OCI-LY7 (cell line): ENCODE measurements at regions of chr2 and their contacts with region 1.

Region 1: GRCh38 chr2:7427293-7428060 is 510.3 kb downstream of the RNF144A start:
- DNase-seq: peak; percentile 92
- H3K4me3 ChIP-seq: no peak overlapping the region
- H3K27ac ChIP-seq: no peak overlapping the region
- H3K4me1 ChIP-seq: peaks cover 48% of the 10 kb centered on the region
- CTCF ChIP-seq: peak; percentile 91

Region 2: DNA sequence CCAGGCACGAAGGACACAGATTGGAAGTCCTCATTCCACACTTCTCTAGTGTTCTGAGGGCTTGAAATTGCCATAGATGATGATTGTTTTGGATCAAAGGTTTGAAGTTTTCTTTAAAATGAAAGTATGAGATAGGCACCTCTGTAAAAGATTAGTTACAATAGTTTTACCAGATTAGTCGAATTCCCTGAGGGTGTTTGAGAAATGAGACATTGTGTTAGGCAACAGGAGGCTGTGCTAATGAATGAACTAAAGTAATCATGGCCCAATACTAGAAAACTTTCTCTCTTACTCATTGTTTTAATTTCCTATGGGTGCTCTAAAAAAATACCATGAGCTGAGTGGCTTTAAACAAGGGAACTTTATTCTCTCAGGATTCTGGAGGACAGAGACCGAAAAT is 88.5 kb before region 1 on chr2:
- CTCF ChIA-PET with region 1: no interaction called
- POLR2A ChIA-PET with region 1: no interaction called
- intact Hi-C with region 1: no loop called
- DNase-seq: no peak
- H3K4me3 ChIP-seq: no peak overlapping the region
- H3K27ac ChIP-seq: no peak overlapping the region
- H3K4me1 ChIP-seq: no peaks in the 10 kb centered on the region
- CTCF ChIP-seq: no peak

Region 3: GRCh38 chr2:7394195-7394594 is 33.3 kb before region 1 on chr2:
- CTCF ChIA-PET with region 1: no interaction called
- POLR2A ChIA-PET with region 1: no interaction called
- intact Hi-C with region 1: no loop called
- DNase-seq: peak; percentile 11
- H3K4me3 ChIP-seq: no peak overlapping the region
- H3K27ac ChIP-seq: no peak overlapping the region
- H3K4me1 ChIP-seq: no peaks in the 10 kb centered on the region
- CTCF ChIP-seq: peak; percentile 52; the same call in 1 of the 2 replicates

Region 4: DNA sequence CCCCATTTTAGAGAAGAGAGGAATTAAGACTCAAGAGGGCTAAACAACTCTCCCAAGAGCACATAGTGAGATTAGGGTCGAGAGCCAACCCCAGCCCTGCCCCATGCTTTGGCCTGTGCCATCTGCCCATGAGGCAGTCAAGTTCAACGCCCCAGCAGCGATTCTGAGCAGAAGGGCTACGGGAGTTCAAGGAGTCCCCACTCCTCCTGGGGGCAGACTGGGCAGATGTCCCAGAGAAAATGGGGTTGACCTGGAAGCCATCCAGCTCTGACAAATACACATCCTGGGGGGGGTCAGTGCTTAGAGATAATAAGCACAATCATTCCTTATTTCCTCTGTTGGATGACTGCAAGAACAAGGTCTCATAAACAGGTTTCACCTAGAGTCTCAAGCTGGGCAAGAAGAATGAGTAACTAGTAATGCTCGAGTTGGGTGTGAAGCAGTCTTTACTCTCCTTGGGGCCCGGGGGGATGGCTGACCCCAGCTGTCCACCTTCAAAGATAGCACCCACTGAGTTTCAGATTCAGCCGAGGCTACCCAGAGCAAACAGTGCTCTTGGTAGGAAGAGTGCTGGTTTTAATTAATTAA is 206.2 kb after region 1 on chr2:
- CTCF ChIA-PET with region 1: no interaction called
- POLR2A ChIA-PET with region 1: no interaction called
- intact Hi-C with region 1: loop called (anchors 2 kb)
- DNase-seq: peak; percentile 25
- H3K4me3 ChIP-seq: no peak overlapping the region
- H3K27ac ChIP-seq: peak overlapping the region; percentile 62
- H3K4me1 ChIP-seq: peaks cover 34% of the 10 kb centered on the region
- CTCF ChIP-seq: no peak

Region 5: DNA sequence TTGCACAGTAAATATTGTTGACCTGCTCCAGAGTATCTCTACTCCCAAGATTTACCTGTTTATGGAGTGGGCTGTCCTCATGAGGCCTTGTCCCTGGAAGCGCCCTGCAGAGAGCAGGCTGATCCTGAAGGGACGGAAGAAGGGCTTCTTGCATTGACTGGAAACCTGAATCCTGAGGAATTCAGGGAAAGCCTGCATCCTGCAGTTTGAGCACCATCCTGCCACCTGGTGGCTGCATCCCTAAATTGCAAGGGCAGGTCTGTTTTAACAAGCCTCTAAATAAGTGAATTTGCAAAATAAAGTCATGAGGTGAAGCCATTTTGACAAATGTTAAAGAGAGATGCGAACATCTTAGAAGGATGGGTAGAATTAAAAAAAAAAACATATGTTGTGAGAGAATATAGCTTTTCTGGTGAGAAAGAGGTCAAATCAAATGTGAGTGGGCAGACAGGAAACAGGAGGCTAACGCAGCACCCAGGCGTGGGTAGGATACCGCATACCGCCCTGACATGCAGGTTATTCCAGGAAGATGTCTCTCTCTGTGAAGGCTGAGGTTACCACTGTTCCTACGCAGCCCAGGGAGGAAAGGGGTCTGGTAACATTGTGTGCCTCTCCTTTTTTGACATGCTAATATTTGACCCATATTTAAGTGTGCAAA is 244.7 kb after region 1 on chr2:
- CTCF ChIA-PET with region 1: no interaction called
- POLR2A ChIA-PET with region 1: interaction called, 4 read pairs
- intact Hi-C with region 1: loop called (anchors 2 kb)
- DNase-seq: peak; percentile 52
- H3K4me3 ChIP-seq: no peak overlapping the region
- H3K27ac ChIP-seq: no peak overlapping the region
- H3K4me1 ChIP-seq: peaks cover 4% of the 10 kb centered on the region
- CTCF ChIP-seq: peak; percentile 96

Region 6: GRCh38 chr2:7740114-7740513 is 312.6 kb after region 1 on chr2:
- CTCF ChIA-PET with region 1: interaction called, 3 read pairs
- POLR2A ChIA-PET with region 1: no interaction called
- intact Hi-C with region 1: loop called (anchors 2 kb)
- DNase-seq: peak; percentile 27
- H3K4me3 ChIP-seq: no peak overlapping the region
- H3K27ac ChIP-seq: no peak overlapping the region
- H3K4me1 ChIP-seq: no peaks in the 10 kb centered on the region
- CTCF ChIP-seq: peak; percentile 49; the same call in 1 of the 2 replicates